ENCODE measurements at regions of chr1 and their contacts with region 1.

Region 1: DNA sequence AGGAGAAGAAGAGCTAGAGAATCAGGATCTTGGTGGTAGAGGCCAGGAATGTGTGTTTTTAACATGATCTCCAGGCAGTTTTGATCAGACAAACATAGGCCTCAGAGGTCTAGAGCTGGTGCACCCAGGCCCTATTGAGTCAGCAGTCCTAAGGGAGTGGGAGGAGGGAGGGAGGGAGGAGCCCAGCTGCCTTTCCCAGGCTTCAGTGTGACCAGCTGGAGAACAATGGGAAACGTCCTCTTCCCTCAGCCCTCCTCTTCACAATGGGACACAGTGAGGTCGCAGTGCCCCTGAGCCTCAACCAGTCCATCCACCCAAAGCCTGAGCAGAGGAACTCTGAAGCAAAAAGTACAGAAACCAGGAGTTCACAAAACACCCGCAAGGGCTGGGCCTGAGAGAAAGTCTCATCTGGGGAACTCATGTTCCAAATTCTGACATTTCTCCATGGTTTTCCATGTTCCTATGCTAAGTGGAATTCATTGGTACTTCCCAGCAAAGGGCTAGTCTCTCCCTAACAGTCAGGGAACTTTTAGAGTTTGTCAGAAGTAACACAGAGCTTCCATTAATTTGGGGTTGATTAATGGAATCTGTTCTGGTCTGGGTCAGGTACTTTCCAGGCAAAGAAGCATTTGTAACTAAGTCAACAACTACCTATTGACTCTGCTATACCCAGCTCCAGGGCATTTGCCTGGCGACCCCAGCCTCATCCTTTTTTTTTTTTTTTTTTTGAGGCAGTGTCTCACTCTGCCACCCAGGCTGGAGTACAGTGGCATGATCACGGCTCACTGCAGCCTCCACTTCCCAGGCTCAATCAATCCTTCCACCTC is 37.5 kb downstream of the ELAPOR1 start:
- DNase-seq: peak in 1 of 2 donors; percentile 19
- ATAC-seq: peak in 3 of 4 donors; percentile 34 to 46 (median 42)
- H3K4me3 ChIP-seq: no peak overlapping the region
- H3K27ac ChIP-seq: peak overlapping the region; percentile 87
- H3K4me1 ChIP-seq: peaks cover 27% of the 10 kb centered on the region
- H3K27me3 ChIP-seq: no peaks in the 10 kb centered on the region
- CTCF ChIP-seq: no peak

Region 2: DNA sequence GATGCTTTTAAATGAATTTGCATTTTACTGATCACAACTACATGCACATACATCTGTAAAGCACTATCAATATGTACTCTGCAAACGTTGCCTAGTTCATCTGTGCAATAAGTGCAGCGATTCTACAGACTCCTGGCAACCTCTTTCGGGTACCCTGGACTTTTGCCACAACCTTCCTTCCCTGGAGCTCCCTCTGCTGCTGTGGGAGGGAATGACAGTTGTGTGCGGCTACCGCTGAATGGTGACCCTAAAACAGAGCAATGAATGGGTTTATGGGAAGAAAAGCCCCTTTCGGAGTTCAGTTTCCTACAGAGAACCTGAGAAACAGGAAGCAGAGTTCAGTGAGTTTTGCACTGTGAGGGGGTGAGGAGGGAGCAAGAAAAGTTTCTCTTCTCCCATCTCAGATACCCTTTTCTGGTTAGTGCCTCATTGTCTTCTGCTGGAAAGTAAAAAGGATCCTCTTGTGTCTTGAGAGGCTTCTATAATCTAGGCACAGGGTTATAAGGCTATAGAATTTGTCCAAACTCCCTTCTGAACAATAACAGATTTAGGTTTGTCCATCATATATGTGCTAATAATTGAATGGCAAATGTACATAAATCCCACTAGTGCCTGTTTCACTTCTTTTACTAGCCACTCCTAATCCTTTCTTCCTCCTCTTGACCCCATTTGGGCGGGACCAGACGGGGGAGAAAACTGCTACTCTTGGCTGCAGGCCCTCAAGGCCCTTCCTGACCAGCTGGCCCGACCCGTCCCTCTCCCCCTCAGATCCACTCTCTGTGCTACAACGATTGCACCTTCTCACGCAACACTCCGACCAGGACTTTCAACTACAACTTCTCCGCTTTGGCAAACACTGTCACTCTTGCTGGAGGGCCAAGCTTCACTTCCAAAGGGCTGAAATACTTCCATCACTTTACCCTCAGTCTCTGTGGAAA is 42.5 kb after region 1 on chr1:
- intact Hi-C with region 1: loop called in 1 of 2 experiments (anchors 5 kb)
- DNase-seq: peak; percentile 21 to 61
- ATAC-seq: peak in 2 of 4 donors; percentile 80 to 91
- H3K4me3 ChIP-seq: no peak overlapping the region
- H3K27ac ChIP-seq: no peak overlapping the region
- H3K4me1 ChIP-seq: peaks cover 6% of the 10 kb centered on the region
- H3K27me3 ChIP-seq: no peaks in the 10 kb centered on the region
- CTCF ChIP-seq: peak; percentile 60